Right ventricle myocardium inferior (tissue), 1 donor: ENCODE measurements at regions of chr3 and their contacts with region 1.

Region 1: DNA sequence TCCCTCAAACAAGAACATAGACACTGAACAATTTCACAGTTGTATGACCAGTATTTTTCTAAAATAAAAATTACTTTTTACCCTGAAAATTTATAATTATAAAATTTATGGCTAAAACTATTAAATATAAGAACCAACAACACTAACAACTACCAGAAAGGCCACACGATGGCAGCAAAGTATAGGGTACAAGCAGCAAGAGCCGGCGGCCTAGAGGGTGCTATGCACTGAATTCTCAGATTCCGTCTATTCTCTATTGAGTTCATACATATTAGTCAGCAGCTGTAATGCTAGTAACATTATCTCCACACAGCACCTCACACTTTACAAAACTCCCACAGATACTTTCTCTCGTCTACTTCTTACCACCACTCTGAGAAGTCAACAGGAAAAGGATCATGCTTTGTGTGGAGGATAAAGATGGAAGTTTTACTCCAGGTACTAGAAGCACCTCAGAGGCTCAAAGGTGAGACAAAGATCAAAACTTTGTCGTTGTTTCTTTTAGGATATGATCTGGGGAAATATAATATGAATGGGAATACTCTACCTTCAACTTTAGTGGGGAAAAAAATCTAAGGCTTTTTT is 160.5 kb downstream of the FGF12 start:
- DNase-seq: peak; percentile 77
- ATAC-seq: peak; percentile 64

Region 2: GRCh38 chr3:192022412-192022811 is 544.4 kb before region 1 on chr3:
- intact Hi-C with region 1: no loop called
- DNase-seq: no peak
- ATAC-seq: no peak

Region 3: DNA sequence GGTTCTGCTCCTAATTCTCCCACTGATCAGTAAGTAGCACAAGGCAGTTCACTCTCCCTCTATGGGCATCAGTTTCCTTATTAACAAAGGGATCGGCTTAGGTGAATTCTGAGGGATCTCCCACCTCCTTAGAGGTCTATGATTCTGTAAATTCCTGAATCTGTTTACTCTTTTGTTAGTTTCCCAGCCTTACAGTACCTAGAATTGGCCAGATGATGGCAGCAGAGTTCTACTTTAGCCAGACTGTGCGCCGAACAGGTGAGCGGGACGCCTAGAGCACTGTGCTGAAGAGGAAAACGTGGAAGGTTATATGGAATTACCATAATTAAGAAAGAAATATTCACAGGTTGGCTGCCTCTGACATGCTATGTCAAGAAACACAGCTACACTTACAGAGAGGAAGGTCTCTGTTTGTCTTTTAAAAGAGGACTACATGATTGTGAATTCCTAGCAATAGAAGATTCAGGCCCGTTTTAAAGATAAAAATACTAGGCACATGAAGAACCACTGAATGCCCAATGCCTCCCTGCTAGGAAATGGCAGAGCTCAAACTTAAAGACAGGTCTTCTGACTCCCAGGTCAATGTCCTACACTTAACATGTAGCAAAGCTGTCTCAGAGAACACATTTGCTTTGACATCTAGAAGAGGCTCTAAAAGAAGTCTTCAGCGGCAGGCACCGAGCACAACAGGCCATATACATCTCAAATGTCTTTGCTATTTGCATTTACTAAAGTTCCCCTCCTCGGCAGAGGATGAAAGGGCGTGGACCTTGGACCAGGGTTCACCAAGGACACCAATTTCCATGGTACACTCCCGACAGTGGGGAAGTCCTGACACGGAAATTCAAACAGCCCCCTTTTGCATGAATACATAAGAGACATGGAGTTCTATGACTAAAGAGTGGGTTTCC is 99.3 kb before region 1 on chr3:
- intact Hi-C with region 1: loop called (anchors 5 kb)
- DNase-seq: no peak
- ATAC-seq: peak; percentile 74

Region 4: DNA sequence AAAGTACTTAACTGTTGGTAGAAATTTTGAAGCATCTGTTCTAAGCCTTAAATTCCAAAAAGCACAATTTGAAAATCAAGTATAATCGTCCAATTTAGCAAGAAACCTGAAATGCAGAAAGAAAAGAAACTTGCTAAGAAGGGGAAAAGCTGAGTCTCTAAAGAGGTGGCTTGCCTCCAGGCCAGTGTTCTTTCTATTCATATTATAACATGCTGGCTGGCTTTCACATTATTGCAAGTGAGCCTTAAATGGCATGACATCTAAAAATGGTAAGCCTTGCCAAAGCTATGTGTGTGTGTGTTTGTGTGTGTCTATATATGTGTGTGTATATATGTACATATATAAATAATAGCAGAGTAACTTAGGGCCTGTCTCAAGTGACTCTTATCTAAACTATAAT is 71.0 kb after region 1 on chr3:
- intact Hi-C with region 1: loop called (anchors 2 kb)
- DNase-seq: no peak
- ATAC-seq: no peak

Region 5: DNA sequence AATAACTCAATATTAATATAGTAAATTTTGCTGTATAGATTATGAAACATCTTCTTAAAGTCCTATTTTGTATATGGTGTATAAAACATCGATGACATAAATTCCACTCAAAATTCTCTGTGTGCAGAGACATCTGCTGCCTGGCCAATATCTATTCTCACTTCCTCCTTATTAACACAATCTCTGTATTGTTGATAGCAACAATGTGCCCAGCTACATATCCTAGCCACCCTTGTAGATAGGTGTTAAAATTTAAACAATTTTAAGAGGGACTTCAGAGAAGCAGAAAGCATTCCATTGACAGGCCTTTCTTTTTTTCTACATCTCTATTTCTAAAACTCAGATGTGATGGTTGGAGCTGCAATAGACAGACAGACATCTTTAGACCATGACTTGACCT is 88.2 kb after region 1 on chr3:
- intact Hi-C with region 1: loop called (anchors 5 kb)
- DNase-seq: no peak
- ATAC-seq: peak; percentile 69

Region 6: DNA sequence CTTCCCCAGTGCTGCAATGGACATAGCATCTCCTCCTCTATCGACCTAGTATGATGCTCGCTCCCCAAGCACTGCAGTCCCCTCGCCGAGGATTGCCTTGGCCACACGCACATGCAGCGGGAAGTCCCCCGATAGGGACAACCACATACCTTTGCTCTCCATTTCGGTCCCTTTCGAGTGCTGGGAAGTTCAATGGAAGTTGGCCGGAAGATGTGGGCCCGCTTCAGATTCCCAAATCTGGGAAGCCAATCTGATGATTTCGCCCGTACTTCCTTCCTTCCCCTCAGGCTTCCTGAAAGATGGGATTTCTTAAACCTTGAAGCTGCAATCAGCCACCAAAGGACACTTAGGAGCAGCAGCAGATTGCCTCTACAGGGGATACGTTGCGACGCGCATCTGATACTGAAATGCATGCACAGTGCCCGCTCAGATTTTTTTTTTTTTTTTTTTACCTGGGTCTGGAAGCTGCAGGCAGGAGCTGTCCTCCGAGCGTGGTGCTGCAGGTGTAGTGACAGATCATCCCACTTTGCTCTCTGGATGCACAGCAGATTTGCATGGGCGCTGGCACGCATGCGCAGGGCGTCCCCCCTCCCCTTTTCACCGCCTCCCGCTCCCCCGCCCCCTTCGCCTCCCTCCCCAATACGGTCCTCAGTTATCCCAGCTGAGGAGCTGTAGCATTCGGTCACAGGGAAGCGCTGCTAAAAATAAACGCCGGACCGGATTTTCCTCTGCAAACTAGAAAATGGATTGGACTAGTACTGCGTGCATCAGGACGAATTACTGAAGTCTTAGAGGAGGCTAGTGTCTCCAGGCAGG is 160.4 kb after region 1 on chr3 and contains the start of gene FGF12:
- intact Hi-C with region 1: loop called (anchors 2 kb)
- DNase-seq: peak; percentile 80
- ATAC-seq: peak; percentile 93
- total RNA-seq, gene FGF12: 340 TPM

Region 7: DNA sequence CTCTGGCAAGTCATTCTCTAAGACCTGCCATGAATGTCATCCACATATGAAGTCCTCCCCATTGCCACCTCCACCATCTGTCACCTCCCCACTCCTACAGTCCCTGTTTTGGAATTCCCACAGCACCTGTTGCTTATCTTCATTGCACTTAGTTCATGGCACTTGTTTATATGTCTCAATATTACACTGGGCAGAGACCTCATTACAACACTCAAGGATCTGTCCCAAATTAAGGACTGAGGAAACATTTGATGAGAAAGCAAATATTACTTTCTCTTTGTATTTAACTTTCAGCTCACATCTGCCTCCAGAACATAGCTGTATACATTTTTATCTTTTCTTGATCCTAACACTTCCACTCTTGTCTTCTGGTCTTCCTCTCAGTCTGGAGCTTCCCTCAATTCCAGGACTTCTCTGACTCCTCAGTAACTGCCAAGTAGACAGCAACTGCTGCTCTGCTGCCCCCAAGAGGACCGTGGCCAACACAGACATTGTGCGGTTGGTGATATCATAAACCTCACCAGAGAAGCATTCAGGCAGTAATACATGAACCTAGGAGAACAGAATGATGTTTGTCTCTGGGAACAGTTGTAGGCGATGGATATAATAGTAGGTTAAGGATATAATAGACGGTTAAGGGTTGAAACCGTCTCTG is 205.6 kb after region 1 on chr3:
- intact Hi-C with region 1: loop called (anchors 2 kb)
- DNase-seq: no peak
- ATAC-seq: peak; percentile 80

Region 8: DNA sequence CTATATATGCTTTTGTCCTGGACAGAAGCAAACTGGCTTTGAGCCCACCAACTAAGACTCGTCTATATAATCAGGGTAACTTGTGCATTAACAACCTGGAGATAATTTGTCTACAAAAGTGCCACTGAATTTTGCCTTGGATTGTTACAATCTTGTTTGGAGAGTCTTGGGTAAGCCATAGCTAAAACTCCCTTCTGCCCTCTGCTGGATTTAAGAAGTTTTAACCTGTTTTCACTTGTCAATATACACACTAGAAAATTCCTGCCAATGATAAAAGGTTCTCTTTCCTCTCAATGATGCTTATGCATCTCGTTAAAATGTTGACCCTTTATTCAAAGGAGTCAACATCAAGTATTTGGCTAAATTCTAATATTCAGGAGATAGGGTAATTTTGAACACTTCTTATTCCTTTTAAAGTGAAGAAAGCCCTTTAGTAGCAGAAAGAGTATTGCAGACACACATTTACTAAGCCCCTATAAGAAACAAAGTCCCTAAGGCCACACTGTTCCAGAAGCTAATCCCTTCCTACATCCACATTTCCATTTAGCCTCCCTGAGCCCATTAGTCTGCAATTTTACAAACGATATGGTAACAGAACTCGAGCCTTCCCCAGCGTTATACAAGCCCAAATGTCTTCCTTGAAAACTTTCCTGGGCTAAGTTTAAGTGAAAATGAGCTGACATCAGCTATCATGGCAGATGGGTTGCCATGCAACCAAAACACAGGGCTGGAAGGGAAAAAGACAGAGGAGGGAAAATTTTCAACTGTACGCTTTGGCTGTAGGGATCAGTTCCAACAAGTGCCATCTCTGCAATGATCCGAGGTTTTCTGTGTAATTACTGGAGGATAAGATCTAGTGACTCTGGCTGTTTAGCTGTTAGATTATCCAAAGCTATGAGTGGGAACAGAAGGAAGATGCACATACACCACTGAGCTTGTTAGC is 236.4 kb after region 1 on chr3:
- intact Hi-C with region 1: loop called (anchors 1 kb)
- DNase-seq: no peak
- ATAC-seq: peak; percentile 63

Region 9: GRCh38 chr3:192879336-192880106 is 312.7 kb after region 1 on chr3:
- intact Hi-C with region 1: no loop called
- DNase-seq: no peak
- ATAC-seq: peak; percentile 56